Thyroid gland (tissue), 4 donors: ENCODE measurements at regions of chr1 and their contacts with region 1.

Region 1: GRCh38 chr1:234589854-234590620 is 19.9 kb downstream of the IRF2BP2 start:
- DNase-seq: no peak
- H3K4me3 ChIP-seq: no peak overlapping the region
- H3K27ac ChIP-seq: no peak overlapping the region
- H3K4me1 ChIP-seq: no peaks in the 10 kb centered on the region
- H3K27me3 ChIP-seq: no peaks in the 10 kb centered on the region
- CTCF ChIP-seq: no peak
- POLR2A ChIP-seq: no peak

Region 2: DNA sequence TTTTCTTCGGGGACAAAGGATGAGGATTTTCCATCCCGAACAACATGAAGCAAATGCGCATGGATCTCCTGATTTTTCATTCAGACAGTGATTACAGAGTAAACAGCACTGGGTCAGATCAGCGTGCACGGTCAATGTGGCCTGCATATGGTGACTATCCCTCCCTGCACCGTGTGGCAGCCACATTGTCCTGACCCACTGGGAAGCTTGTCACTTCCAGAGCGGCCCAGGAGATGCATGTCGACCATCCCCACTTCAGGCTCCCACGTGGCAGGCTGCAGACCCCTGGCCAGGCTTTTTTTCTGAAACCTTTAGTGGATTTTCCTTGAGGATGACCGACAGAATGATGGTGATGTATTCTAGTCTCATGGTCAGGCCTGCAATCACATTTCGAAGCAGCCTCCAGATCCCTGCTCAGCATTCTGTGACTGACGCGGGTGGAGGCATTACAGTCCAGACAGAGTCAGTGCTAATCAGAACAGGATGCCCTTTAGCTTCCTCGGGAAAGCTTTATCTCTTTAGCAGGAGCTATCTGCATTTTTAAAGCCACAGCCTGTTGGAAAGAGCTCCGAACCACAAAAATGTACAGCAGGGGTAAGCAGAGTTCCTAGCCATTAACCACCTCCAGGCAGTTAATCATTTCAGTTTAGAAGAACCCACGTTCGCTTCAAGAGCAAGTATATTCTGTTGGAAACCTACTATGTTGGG is 36.7 kb before region 1 on chr1:
- intact Hi-C with region 1: loop called (anchors 5 kb)
- DNase-seq: no peak
- H3K4me3 ChIP-seq: no peak overlapping the region
- H3K27ac ChIP-seq: no peak overlapping the region
- H3K4me1 ChIP-seq: peaks cover 0 to 4% of the 10 kb centered on the region in 2 donors
- H3K27me3 ChIP-seq: no peaks in the 10 kb centered on the region
- CTCF ChIP-seq: no peak
- POLR2A ChIP-seq: no peak

Region 3: GRCh38 chr1:234631721-234632125 is 41.7 kb after region 1 on chr1:
- intact Hi-C with region 1: no loop called
- DNase-seq: no peak
- H3K4me3 ChIP-seq: no peak overlapping the region
- H3K27ac ChIP-seq: no peak overlapping the region
- H3K4me1 ChIP-seq: no peaks in the 10 kb centered on the region
- H3K27me3 ChIP-seq: no peaks in the 10 kb centered on the region
- CTCF ChIP-seq: no peak
- POLR2A ChIP-seq: no peak